Activated T-helper 1 cell treated with anti-CD3 and anti-CD28 coated beads, Interleukin-12 subunit alpha, Interleukin-12 subunit beta, Interleukin-2, Interleukin-4 antibody, amounts not matched to agents 30 ng/mL and 10 ng/mL and 1 ng/mL, durations not matched to agents 14 hours and 24 hours and 36 hours (primary cell): ENCODE measurements at regions of chr19 and their contacts with region 1.

Region 1: DNA sequence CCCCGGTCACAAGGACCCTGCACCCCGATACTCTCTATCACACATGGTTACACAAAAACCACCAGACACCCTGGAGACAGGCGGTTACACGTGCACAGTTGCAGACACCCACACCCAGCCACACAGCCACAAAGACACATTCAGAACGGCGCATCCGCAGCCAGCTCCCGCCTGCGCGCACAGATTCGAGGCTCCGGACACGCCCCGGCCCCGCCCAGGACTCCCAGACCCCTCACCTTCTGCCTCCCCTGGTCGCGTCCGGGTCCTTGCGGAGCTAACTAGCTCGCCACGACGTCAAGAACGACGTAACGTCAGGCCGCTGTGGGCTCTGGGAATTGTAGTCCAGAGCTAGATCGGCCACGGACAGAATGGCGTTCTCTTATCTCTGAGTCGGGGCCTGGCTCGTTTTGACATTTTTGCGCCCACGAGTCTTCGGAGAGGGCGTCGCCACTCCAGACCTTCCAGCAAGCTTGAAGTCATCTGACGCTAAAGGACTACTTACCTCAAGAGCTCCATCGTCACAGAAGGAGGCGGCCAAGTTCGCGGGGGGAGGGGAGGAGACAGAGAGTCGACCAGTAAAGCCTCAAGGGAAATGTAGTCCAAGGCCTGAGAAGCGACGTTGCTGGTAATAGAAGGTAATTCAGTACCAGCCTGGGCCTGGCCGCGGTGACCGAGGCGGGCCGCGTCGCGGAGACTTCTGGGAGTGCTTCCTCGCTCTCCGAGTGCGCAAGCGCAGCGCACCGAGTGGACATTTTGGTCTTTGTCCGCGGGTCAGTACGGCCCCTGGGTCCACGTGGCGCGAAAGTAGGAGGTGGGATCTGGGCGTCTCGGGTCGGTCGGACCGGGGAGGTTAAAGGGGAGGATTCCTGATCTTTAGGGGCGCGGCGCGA is at the starts of genes ZNF146 and ZNF565:
- DNase-seq: peak; percentile 94
- H3K4me3 Mint-ChIP-seq: no peak within 1 kb of the TSS
- H3K27ac Mint-ChIP-seq: no peak within 1 kb of the TSS
- H3K4me1 Mint-ChIP-seq: no peaks in the 10 kb centered on the region
- H3K27me3 Mint-ChIP-seq: no peaks in the 10 kb centered on the region
- total RNA-seq, gene ZNF146: 82.5 and 94.0 TPM in 2 replicates
- total RNA-seq, gene ZNF565: 2.1 and 2.4 TPM in 2 replicates

Region 2: DNA sequence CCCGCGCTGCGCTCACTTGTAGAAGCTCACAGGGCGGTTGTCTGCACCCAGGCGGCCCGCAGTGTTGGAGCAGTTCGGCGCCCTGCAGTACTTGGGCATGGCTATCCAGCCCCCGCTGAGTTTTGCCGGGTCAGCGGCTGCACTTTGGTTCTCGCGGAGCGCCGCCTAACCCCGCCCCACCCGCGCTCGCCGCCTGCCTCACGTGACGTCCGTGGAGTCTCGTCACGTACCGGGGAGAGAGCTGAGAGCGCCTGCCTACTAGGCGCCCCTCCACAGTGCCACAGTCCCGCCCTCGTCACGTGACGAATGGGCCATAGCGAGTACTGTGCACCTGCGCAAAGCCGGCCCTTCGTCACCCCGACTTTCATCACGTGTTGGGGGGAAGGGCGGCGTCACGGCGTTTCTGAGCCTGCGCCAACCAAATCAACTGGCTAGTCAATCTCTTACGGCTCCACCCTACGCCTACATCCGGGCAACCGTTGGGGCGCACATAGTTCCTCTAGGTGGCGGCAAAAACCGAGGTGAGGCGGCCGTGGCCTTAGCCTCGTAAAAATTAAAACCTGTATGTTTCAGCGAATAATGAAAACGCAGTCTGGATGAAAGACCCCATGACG is 160.4 kb before region 1 on chr19 and contains the start of gene THAP8:
- intact Hi-C with region 1: loop called (anchors 1 kb)
- DNase-seq: peak; percentile 100
- H3K4me3 Mint-ChIP-seq: peak within 1 kb of the TSS; percentile 99
- H3K27ac Mint-ChIP-seq: peak within 1 kb of the TSS; percentile 96
- H3K4me1 Mint-ChIP-seq: peaks cover 45% of the 10 kb centered on the region
- H3K27me3 Mint-ChIP-seq: no peaks in the 10 kb centered on the region
- total RNA-seq, gene THAP8: 1.6 TPM in 2 replicates

Region 3: GRCh38 chr19:36225219-36225892 is 10.7 kb after region 1 on chr19:
- intact Hi-C with region 1: no loop called
- DNase-seq: no peak
- H3K4me3 Mint-ChIP-seq: no peak overlapping the region
- H3K27ac Mint-ChIP-seq: peak overlapping the region; percentile 63
- H3K4me1 Mint-ChIP-seq: peaks cover 14% of the 10 kb centered on the region
- H3K27me3 Mint-ChIP-seq: no peaks in the 10 kb centered on the region

Region 4: DNA sequence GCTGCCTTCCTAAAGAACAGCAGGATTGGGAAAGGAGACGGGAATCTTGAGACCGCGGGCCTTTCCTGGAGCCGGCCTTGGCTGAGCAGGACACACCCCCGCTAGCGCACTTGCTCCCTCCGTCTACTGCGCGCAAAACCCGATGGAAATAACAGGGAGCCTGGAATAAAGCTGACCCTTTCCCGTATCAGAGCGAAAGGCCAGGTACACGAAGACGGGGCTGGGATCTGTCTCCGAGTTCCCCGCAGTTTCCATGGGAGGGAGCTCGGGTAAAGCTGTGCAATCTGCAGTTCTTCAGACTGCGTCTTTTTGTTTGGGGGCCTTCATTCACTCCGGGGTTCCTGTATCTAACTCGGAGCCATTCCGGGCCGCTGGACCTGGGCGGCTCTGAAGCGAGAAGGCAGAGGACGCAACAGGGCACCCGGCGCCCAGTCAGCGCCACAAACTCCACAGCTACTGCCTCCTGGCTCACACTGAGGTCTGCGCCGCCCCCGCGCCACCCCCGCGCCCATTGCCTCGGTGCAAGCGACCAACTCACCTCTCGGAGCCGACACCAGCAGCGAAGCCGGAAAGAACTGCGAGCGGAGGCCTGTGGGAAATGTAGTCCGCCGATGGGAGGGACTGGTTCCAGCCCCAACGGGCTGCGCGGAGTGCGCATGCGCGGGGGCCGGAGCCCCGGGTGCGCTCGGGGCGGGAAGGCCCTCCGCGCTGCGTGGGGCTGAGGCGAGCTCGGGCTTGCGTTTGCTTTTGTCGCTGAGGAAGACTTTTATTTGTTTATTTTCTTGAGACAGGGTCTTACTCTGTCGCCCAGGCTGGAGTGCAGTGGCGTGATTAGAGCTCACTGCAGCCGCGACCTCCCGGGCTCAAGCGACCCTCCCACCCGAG is 164.2 kb after region 1 on chr19 and contains the start of gene ZFP14:
- intact Hi-C with region 1: loop called (anchors 1 kb)
- DNase-seq: peak; percentile 91
- H3K4me3 Mint-ChIP-seq: peak within 1 kb of the TSS; percentile 86
- H3K27ac Mint-ChIP-seq: peak within 1 kb of the TSS; percentile 73
- H3K4me1 Mint-ChIP-seq: peaks cover 13% of the 10 kb centered on the region
- H3K27me3 Mint-ChIP-seq: no peaks in the 10 kb centered on the region
- total RNA-seq, gene ZFP14: 0.83 and 1.7 TPM in 2 replicates

Region 5: GRCh38 chr19:36573020-36573885 is 358.6 kb after region 1 on chr19 and contains the start of gene ZNF529:
- intact Hi-C with region 1: loop called (anchors 1 kb)
- DNase-seq: peak; percentile 85
- H3K4me3 Mint-ChIP-seq: peak within 1 kb of the TSS; percentile 89
- H3K27ac Mint-ChIP-seq: peak within 1 kb of the TSS; percentile 98
- H3K4me1 Mint-ChIP-seq: peaks cover 31% of the 10 kb centered on the region
- H3K27me3 Mint-ChIP-seq: no peaks in the 10 kb centered on the region
- total RNA-seq, gene ZNF529: 20.3 and 20.7 TPM in 2 replicates

Region 6: DNA sequence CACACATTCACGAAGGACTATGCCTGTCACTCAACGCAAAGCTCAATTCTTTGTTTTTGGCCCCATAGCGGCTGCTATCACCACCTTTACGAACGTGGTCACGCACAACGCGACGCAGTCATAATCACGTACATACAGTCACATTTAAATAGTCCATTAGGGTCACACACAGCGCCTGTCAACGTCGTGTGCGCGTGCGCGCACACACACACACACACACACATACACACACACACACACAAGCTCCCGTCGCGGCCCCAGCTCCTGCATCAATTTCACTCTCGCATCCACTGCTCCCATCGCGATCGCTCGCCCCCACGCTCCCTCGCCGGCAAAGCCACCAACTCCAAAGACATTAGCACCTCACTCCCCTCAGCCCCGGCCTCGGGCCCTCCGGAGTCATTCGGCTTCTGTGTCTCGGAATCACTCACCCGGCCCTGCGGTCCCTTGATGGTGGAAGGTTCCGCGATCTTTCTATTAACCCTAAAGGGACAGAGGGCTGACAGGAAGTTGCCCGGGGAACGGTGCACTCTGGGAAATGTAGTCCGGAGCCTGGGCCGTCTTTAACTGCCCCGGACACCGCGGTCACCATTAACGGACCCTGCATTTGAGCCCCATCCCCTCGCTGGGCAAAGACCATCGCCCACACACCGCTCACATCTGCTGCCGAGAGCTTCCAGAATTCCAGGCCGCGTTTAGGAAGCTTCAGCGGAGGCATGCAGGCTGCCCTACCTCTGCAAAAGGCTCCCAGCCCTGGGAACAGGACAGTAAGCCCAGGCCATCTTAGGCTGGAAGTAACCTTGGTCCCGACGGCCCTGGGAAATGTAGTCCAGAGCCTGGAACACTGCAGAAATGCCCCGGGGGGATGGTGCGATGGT is 623.5 kb after region 1 on chr19 and contains the start of gene ZNF790:
- intact Hi-C with region 1: loop called (anchors 5 kb)
- DNase-seq: peak; percentile 81
- H3K4me3 Mint-ChIP-seq: no peak within 1 kb of the TSS
- H3K27ac Mint-ChIP-seq: no peak within 1 kb of the TSS
- H3K4me1 Mint-ChIP-seq: no peaks in the 10 kb centered on the region
- H3K27me3 Mint-ChIP-seq: no peaks in the 10 kb centered on the region
- total RNA-seq, gene ZNF790: 4.4 and 4.5 TPM in 2 replicates

Region 7: DNA sequence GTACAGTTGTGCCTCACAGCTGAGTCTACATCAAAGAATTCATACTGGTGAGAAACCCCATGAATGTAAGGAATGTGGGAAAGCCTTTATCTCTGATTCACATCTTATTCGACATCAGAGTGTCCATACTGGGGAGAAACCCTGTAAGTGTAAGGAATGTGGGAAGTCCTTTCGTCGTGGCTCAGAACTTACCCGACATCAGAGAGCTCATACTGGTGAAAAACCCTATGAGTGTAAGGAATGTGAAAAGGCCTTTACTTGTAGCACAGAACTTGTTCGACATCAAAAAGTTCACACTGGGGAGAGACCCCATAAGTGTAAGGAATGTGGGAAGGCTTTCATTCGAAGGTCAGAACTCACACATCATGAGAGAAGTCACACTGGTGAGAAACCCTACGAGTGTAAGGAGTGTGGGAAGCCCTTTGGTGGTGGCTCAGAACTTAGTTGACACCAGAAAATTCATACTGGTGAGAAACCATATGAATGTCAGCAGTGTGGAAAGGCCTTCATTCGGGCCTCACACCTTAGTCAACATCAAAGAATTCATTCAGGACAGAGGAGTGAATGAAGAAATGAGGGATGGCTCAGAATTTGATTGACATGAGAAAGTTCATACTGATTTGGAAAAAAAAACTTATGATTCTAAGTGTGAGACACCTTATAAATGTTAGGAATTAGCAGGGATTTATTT is 782.7 kb after region 1 on chr19:
- intact Hi-C with region 1: no loop called
- DNase-seq: no peak
- H3K4me3 Mint-ChIP-seq: no peak overlapping the region
- H3K27ac Mint-ChIP-seq: no peak overlapping the region
- H3K4me1 Mint-ChIP-seq: no peaks in the 10 kb centered on the region
- H3K27me3 Mint-ChIP-seq: no peaks in the 10 kb centered on the region

Region 8: GRCh38 chr19:37172368-37173366 is 958.0 kb after region 1 on chr19 and contains the start of gene ZNF585A:
- intact Hi-C with region 1: loop called (anchors 1 kb)
- DNase-seq: peak; percentile 74
- H3K4me3 Mint-ChIP-seq: no peak within 1 kb of the TSS
- H3K27ac Mint-ChIP-seq: no peak within 1 kb of the TSS
- H3K4me1 Mint-ChIP-seq: no peaks in the 10 kb centered on the region
- H3K27me3 Mint-ChIP-seq: no peaks in the 10 kb centered on the region
- total RNA-seq, gene ZNF585A: 1.2 and 2.6 TPM in 2 replicates